Naive thymus-derived CD4-positive, alpha-beta T cell (primary cell): ENCODE measurements at regions of chr6 and their contacts with region 1.

Region 1: DNA sequence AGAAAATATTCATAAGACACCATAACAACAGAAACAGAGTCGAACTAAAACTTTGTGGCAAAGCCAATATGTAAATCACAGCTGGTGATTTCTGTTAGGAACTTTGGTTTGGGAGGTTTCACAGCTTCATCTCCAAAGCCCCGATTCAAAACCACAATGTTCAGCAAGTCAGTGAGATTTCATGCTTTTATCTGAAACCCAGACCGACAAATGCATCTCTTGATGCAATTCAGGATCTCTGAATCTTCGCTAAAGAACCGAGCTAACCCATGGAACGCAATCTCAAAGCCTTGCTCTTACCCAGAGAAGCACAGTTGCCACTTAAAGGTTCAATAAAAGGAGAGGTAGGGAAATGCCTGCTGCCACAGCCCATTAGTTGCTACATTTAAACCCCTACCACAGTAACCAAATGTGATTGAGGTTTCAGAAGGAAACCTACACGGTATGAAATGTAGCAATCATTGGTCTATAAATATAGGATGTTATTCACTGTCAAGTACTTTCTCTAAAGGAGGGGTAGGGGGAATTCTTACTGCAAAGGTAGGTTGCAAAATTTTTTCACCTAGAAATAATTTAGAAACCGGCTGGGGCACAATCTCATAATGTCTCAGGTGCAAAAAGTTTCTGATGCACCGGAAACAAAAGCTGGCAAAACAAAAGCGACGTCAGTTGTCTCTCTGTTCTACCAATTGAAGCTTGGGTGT is 381.0 kb upstream of the ARID1B start:
- DNase-seq: peak in 7 of 9 donors; percentile 67 to 85 (median 77)
- ATAC-seq: peak; percentile 85
- H3K4me3 ChIP-seq: peak overlapping the region; percentile 14
- H3K4me3 Mint-ChIP-seq: peak overlapping the region; percentile 49 to 95 (median 84)
- H3K27ac ChIP-seq: peak overlapping the region; percentile 85
- H3K27ac Mint-ChIP-seq: peak overlapping the region; percentile 60 to 100 (median 99)
- H3K4me1 ChIP-seq: peaks cover 16 to 67% of the 10 kb centered on the region in 2 donors
- H3K4me1 Mint-ChIP-seq: peaks cover 17 to 99% (median 89%) of the 10 kb centered on the region in 7 donors
- H3K27me3 ChIP-seq: no peaks in the 10 kb centered on the region
- H3K27me3 Mint-ChIP-seq: peaks cover 0 to 40% (median 0%) of the 10 kb centered on the region in 5 donors

Region 2: GRCh38 chr6:156167625-156168071 is 228.6 kb before region 1 on chr6:
- CTCF ChIA-PET with region 1: no interaction called
- POLR2A ChIA-PET with region 1: interaction called, 3 read pairs
- intact Hi-C with region 1: loop called in 1 of 2 experiments (anchors 5 kb)
- DNase-seq: peak in 1 of 9 donors; percentile 8
- ATAC-seq: no peak
- H3K4me3 ChIP-seq: peak overlapping the region; percentile 26
- H3K4me3 Mint-ChIP-seq: peak overlapping the region; percentile 68 to 87 (median 80)
- H3K27ac ChIP-seq: peak overlapping the region; percentile 16
- H3K27ac Mint-ChIP-seq: peak overlapping the region; percentile 10 to 89 (median 81)
- H3K4me1 ChIP-seq: peaks cover 0 to 7% of the 10 kb centered on the region in 2 donors
- H3K4me1 Mint-ChIP-seq: peaks cover 8 to 65% (median 38%) of the 10 kb centered on the region in 7 donors
- H3K27me3 ChIP-seq: no peaks in the 10 kb centered on the region
- H3K27me3 Mint-ChIP-seq: no peaks in the 10 kb centered on the region

Region 3: DNA sequence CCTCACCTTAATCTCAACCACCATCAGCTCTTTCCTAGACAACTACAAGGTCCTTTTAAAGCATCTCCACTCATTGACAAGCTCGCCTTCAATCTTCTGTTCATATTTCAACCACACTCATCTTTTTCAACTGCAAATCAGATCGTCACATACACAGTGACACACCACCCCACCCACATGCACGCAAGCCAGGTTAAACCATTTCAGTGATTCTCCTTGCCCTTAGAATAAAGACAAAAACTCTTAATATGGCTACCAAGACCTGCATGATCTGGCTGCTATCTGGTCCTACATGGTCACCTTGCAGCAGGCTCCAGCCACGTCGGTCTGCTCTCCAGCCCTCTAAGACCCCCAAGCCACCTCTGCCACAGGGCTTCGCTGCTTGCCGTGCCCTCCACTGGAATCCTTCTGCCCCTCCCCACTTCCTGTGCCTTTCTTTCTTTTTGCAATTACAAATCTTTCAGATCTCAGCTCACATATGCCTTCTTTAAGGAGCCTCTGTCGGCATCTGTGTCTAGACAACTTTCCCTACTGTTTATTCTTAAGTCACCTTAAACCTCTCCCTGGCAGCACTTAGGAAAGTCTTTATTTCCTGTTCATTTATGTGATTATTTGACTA is 126.4 kb before region 1 on chr6:
- CTCF ChIA-PET with region 1: no interaction called
- POLR2A ChIA-PET with region 1: no interaction called
- intact Hi-C with region 1: loop called in 1 of 2 experiments (anchors 2 kb)
- DNase-seq: peak in 7 of 9 donors; percentile 29 to 67 (median 56)
- ATAC-seq: peak; percentile 69
- H3K4me3 ChIP-seq: peak overlapping the region; percentile 53
- H3K4me3 Mint-ChIP-seq: peak overlapping the region; percentile 2 to 87 (median 78)
- H3K27ac ChIP-seq: peak overlapping the region; percentile 55
- H3K27ac Mint-ChIP-seq: peak overlapping the region; percentile 0 to 92 (median 77)
- H3K4me1 ChIP-seq: peaks cover 0 to 20% of the 10 kb centered on the region in 2 donors
- H3K4me1 Mint-ChIP-seq: peaks cover 10 to 41% (median 32%) of the 10 kb centered on the region in 7 donors
- H3K27me3 ChIP-seq: no peaks in the 10 kb centered on the region
- H3K27me3 Mint-ChIP-seq: no peaks in the 10 kb centered on the region

Region 4: GRCh38 chr6:156410649-156411048 is 14.4 kb after region 1 on chr6:
- CTCF ChIA-PET with region 1: interaction called, 3 read pairs
- POLR2A ChIA-PET with region 1: interaction called, 15 read pairs
- intact Hi-C with region 1: loop called in 1 of 2 experiments (anchors 1 kb)
- DNase-seq: no peak
- ATAC-seq: no peak
- H3K4me3 ChIP-seq: no peak overlapping the region
- H3K4me3 Mint-ChIP-seq: no peak overlapping the region
- H3K27ac ChIP-seq: no peak overlapping the region
- H3K27ac Mint-ChIP-seq: no peak overlapping the region
- H3K4me1 ChIP-seq: no peaks in the 10 kb centered on the region
- H3K4me1 Mint-ChIP-seq: peaks cover 0 to 2% (median 0%) of the 10 kb centered on the region in 7 donors
- H3K27me3 ChIP-seq: no peaks in the 10 kb centered on the region
- H3K27me3 Mint-ChIP-seq: no peaks in the 10 kb centered on the region

Region 5: DNA sequence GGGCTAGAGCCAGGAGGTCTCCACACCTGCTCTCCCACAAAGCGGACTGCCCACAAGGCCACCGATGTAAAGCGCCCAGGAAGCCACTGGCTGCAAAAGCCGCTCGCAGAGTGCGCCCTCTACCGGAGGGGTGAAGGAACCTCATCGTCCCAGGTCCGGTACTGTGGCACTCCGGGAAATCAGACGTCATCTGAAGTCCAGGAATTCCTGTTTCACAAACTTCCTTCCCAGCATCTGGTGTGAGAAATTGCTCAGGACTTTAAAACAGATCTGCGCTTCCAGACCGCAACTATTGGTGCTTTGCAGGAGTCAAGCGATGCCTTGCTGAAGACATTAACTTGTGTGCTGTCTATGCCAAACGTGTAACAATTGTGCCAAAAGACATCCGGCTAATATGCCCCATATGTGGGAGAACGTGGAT is 265.8 kb after region 1 on chr6:
- CTCF ChIA-PET with region 1: no interaction called
- POLR2A ChIA-PET with region 1: no interaction called
- intact Hi-C with region 1: no loop called
- DNase-seq: peak in 1 of 9 donors; percentile 65
- ATAC-seq: no peak
- H3K4me3 ChIP-seq: no peak overlapping the region
- H3K4me3 Mint-ChIP-seq: peak overlapping the region in 1 of 10 donors; percentile 36
- H3K27ac ChIP-seq: no peak overlapping the region
- H3K27ac Mint-ChIP-seq: no peak overlapping the region
- H3K4me1 ChIP-seq: no peaks in the 10 kb centered on the region
- H3K4me1 Mint-ChIP-seq: peaks cover 0 to 13% (median 7%) of the 10 kb centered on the region in 7 donors
- H3K27me3 ChIP-seq: no peaks in the 10 kb centered on the region
- H3K27me3 Mint-ChIP-seq: peaks cover 0 to 16% (median 9%) of the 10 kb centered on the region in 5 donors